Activated CD4-positive, alpha-beta memory T cell treated with anti-CD3 and anti-CD28 coated beads, Interleukin-2, amount 10 ng/mL, durations not matched to agents 7 days and 5 days (primary cell): ENCODE measurements at regions of chr5 and their contacts with region 1.

Region 1: GRCh38 chr5:140261403-140262171 is 41.3 kb downstream of the PFDN1 start:
- DNase-seq: peak; percentile 62
- H3K4me3 Mint-ChIP-seq: no peak overlapping the region
- H3K27ac Mint-ChIP-seq: peak overlapping the region; percentile 77
- H3K4me1 Mint-ChIP-seq: peaks cover 81% of the 10 kb centered on the region
- H3K27me3 Mint-ChIP-seq: no peaks in the 10 kb centered on the region

Region 2: GRCh38 chr5:140232731-140233130 is 28.9 kb before region 1 on chr5:
- CTCF ChIA-PET with region 1: no interaction called
- POLR2A ChIA-PET with region 1: no interaction called
- DNase-seq: no peak
- H3K4me3 Mint-ChIP-seq: no peak overlapping the region
- H3K27ac Mint-ChIP-seq: no peak overlapping the region
- H3K4me1 Mint-ChIP-seq: no peaks in the 10 kb centered on the region
- H3K27me3 Mint-ChIP-seq: peaks cover 5% of the 10 kb centered on the region

Region 3: GRCh38 chr5:140251527-140251973 is 10.0 kb before region 1 on chr5:
- CTCF ChIA-PET with region 1: interaction called, 5 read pairs
- POLR2A ChIA-PET with region 1: interaction called, 36 read pairs
- DNase-seq: peak; percentile 86
- H3K4me3 Mint-ChIP-seq: peak overlapping the region; percentile 48
- H3K27ac Mint-ChIP-seq: peak overlapping the region; percentile 94
- H3K4me1 Mint-ChIP-seq: peaks cover 34% of the 10 kb centered on the region
- H3K27me3 Mint-ChIP-seq: no peaks in the 10 kb centered on the region

Region 4: GRCh38 chr5:140302786-140303639 is 41.4 kb after region 1 on chr5 and contains the start of gene PFDN1:
- CTCF ChIA-PET with region 1: no interaction called
- POLR2A ChIA-PET with region 1: interaction called, 20 read pairs
- DNase-seq: peak; percentile 94
- H3K4me3 Mint-ChIP-seq: peak within 1 kb of the TSS; percentile 92
- H3K27ac Mint-ChIP-seq: peak within 1 kb of the TSS; percentile 80
- H3K4me1 Mint-ChIP-seq: peaks cover 40% of the 10 kb centered on the region
- H3K27me3 Mint-ChIP-seq: peaks cover 6% of the 10 kb centered on the region
- total RNA-seq, gene PFDN1: 52.3 to 55.8 TPM

Region 5: GRCh38 chr5:140481758-140482157 is 220.2 kb after region 1 on chr5:
- CTCF ChIA-PET with region 1: no interaction called
- POLR2A ChIA-PET with region 1: no interaction called
- DNase-seq: no peak
- H3K4me3 Mint-ChIP-seq: no peak overlapping the region
- H3K27ac Mint-ChIP-seq: no peak overlapping the region
- H3K4me1 Mint-ChIP-seq: no peaks in the 10 kb centered on the region
- H3K27me3 Mint-ChIP-seq: no peaks in the 10 kb centered on the region